ENCODE measurements at regions of chrX and their contacts with region 1.

Region 1: DNA sequence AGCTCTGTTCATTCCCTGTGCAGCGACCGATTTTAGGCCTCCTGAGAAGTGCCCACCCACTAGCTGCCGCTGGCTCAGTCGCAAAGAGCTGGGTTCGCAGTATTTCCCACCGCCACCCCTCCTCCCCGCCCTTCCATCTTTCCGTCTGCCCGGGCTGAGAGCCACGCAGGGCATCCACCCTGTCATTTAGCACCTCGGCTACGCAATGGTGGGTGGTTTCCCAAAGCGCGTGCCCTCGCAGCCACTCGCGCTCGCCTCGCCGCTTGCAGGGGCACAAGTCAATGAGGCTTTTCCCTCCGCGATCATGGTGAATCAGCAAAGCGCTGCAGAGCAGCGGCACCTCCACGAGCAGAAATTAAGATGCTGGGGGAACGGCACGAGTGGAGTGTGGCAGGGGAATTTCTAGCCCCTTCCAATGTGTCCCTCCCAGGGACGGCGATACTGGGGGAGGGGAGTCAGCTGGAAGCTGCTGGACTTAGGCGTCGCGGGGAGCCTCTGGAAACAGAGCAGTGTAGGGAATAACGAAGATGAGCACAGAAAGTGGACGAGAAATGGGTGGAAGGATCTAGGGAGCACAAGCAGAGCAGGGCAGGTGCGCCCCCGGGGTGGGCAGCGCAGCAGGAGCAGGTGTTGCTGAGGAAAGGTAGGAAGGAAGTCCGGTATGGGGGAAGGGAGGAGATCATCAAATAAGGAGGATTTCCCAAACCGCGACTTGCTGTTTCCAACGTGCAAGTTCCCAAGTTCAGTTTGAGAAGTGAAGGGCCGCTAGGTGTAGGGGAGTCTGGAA is 2.4 kb upstream of the PTCHD1 start:
- DNase-seq: no peak
- ATAC-seq: no peak
- H3K4me3 ChIP-seq: peak overlapping the region; percentile 28 to 41; a peak in 3 of 4 replicates
- H3K27ac ChIP-seq: no peak overlapping the region
- H3K4me1 ChIP-seq: no peaks in the 10 kb centered on the region
- H3K27me3 ChIP-seq: no peaks in the 10 kb centered on the region; the same call in 1 of the 2 replicates
- CTCF ChIP-seq: no peak

Region 2: GRCh38 chrX:23317799-23318724 is 14.2 kb before region 1 on chrX:
- CTCF ChIA-PET with region 1: interaction called, 13 read pairs
- POLR2A ChIA-PET with region 1: no interaction called
- in situ Hi-C with region 1: no loop called
- intact Hi-C with region 1: no loop called
- DNase-seq: peak; percentile 39
- ATAC-seq: no peak
- H3K4me3 ChIP-seq: no peak overlapping the region
- H3K27ac ChIP-seq: no peak overlapping the region
- H3K4me1 ChIP-seq: no peaks in the 10 kb centered on the region
- H3K27me3 ChIP-seq: no peaks in the 10 kb centered on the region
- CTCF ChIP-seq: peak; percentile 81

Measured in Panc1 (cell line).